ENCODE measurements at regions of chr9 and their contacts with region 1.

Region 1: GRCh38 chr9:33446946-33447798 is at the start of gene AQP3:
- DNase-seq: peak; percentile 85
- H3K4me3 Mint-ChIP-seq: peak within 1 kb of the TSS; percentile 94
- H3K27ac Mint-ChIP-seq: peak within 1 kb of the TSS; percentile 97
- H3K4me1 Mint-ChIP-seq: peaks cover 67% of the 10 kb centered on the region
- H3K27me3 Mint-ChIP-seq: no peaks in the 10 kb centered on the region
- total RNA-seq, gene AQP3: 190 to 194 TPM

Region 2: DNA sequence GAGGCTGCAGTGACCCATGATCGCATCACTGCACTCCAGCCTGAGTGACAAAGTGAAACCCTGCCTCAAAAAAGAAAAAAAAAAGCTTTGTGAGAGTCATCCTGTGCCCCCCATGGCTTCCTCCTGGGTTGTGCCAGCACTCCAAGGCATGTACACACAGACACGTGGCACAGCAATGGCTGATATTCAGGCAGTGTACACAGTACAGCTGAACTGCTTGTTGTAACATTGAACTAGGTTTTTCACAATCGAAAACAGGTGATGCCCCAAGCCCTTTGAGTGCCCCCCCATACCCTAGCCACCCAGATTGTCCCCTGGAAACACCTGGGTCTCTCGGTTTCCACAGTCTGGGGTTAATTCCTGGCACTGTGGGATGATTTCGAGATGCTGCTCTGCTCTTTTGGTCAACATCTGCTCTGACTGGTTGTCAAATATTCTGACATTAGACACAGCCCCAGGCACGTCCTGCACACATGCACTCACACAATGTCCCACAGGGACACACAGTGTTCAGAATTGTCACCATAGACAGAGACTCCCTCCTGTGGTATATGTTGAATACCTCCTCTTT is 198.0 kb before region 1 on chr9:
- CTCF ChIA-PET with region 1: no interaction called
- POLR2A ChIA-PET with region 1: no interaction called
- DNase-seq: no peak
- H3K4me3 Mint-ChIP-seq: no peak overlapping the region
- H3K27ac Mint-ChIP-seq: no peak overlapping the region
- H3K4me1 Mint-ChIP-seq: peaks cover 7% of the 10 kb centered on the region
- H3K27me3 Mint-ChIP-seq: no peaks in the 10 kb centered on the region

Region 3: DNA sequence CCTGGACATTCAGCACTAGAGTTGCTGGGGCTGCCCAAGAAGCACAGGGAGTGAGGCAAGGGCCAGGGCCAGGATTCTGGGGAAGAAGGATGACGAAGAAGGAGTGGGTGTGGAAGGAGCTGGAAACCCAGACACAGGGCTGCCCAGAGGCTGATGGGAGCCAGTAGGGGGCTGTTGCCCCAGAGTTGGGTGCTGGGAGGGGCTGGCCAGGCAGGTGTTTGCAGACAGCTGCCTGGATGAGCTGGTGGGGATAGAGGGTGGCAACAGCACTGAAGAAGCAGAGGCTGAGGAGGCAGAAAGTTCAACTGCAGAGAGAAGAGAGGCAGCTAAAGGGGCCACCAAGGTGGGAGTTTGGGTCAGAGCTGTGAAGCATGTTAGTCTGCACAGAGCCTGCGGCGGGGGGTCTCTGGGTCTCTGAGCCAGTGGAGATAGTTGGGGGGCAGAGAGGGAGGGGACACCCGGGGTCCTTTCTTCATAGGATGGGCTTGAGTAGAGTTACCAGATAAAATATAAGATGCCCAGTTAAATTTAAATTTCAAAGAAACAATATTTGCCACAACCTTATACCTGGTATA is 42.3 kb before region 1 on chr9:
- CTCF ChIA-PET with region 1: interaction called, 132 read pairs
- POLR2A ChIA-PET with region 1: no interaction called
- DNase-seq: no peak
- H3K4me3 Mint-ChIP-seq: no peak overlapping the region
- H3K27ac Mint-ChIP-seq: no peak overlapping the region
- H3K4me1 Mint-ChIP-seq: peaks cover 18% of the 10 kb centered on the region
- H3K27me3 Mint-ChIP-seq: peaks cover 2% of the 10 kb centered on the region

Region 4: DNA sequence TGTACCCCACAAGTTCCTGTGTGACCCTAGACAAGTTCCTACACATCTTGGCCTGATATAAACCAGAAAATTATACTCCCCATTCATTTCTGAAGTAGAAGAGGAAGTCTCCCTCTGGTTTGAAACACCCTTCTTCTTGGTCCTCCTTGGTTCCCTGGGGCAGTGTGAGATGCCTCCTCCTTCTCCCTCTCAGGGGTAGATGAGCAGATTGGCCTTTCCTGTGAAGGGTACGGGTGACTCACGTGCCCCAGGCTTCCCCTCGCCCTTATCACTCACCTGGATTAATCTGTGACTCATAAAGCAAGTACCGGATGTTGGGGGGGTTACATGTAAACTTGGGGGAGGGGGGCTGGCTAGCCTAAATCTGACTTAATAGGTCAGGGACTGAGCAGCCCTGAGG is 11.3 kb after region 1 on chr9:
- CTCF ChIA-PET with region 1: interaction called, 103 read pairs
- POLR2A ChIA-PET with region 1: no interaction called
- DNase-seq: peak; percentile 38
- H3K4me3 Mint-ChIP-seq: peak overlapping the region; percentile 20
- H3K27ac Mint-ChIP-seq: peak overlapping the region; percentile 82
- H3K4me1 Mint-ChIP-seq: peaks cover 54% of the 10 kb centered on the region
- H3K27me3 Mint-ChIP-seq: no peaks in the 10 kb centered on the region

Measured in activated CD4-positive, alpha-beta T cell treated with anti-CD3 and anti-CD28 coated beads, Interleukin-2, amount 10 ng/mL, durations not matched to agents 7 days and 5 days (primary cell).